ENCODE measurements at regions of chr1 and their contacts with region 1.

Region 1: GRCh38 chr1:225474986-225475820 is 47.4 kb upstream of the LBR start:
- DNase-seq: peak in 1 of 2 donors; percentile 69
- ATAC-seq: peak; percentile 84 to 90 (median 90)
- H3K4me3 ChIP-seq: peak overlapping the region in 4 of 10 donors; percentile 19 to 35 (median 26)
- H3K27ac ChIP-seq: no peak overlapping the region
- H3K4me1 ChIP-seq: peaks cover 0 to 9% (median 6%) of the 10 kb centered on the region in 9 donors
- H3K27me3 ChIP-seq: no peaks in the 10 kb centered on the region
- CTCF ChIP-seq: peak; percentile 100

Region 2: DNA sequence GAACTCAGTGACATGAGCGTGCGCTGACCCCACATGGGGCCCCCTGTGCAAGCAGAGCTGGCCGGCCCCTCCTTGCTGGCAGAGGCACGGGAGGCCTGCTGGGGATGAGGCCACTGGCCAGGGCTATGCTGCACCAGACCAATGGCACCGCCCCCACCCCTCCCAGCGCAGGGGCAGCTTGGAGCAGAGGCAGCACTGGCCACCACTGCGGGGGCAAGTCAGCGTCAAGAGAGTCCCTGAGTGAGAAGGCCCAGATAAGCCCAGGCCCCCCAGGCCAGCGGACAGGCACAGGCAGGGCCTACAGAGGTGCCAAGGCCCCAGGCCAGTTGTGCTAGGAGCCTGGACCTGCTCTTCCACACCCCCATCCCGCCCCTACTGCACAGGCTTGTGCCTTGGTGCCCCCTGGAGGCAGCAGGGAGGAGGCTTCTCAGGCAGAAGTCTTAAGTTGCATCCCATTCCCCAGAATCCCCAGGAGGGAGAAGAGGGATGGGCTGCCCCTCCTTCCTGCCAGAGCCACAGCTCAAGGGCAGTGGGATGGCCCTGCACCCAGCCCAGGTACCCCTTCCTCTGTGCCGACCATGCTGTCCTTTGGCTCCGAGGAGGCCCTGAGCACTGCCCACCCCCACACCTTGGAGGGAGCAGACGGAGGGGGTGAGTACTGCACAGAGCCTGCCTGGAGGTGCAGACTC is 370.5 kb after region 1 on chr1:
- intact Hi-C with region 1: loop called (anchors 1 to 10 kb)
- DNase-seq: peak; percentile 78 to 81
- ATAC-seq: peak; percentile 77 to 88 (median 81)
- H3K4me3 ChIP-seq: no peak overlapping the region
- H3K27ac ChIP-seq: peak overlapping the region in 6 of 10 donors; percentile 12 to 38 (median 24)
- H3K4me1 ChIP-seq: peaks cover 0 to 40% (median 17%) of the 10 kb centered on the region in 9 donors
- H3K27me3 ChIP-seq: no peaks in the 10 kb centered on the region
- CTCF ChIP-seq: peak; percentile 57 to 81 (median 75)

Region 3: DNA sequence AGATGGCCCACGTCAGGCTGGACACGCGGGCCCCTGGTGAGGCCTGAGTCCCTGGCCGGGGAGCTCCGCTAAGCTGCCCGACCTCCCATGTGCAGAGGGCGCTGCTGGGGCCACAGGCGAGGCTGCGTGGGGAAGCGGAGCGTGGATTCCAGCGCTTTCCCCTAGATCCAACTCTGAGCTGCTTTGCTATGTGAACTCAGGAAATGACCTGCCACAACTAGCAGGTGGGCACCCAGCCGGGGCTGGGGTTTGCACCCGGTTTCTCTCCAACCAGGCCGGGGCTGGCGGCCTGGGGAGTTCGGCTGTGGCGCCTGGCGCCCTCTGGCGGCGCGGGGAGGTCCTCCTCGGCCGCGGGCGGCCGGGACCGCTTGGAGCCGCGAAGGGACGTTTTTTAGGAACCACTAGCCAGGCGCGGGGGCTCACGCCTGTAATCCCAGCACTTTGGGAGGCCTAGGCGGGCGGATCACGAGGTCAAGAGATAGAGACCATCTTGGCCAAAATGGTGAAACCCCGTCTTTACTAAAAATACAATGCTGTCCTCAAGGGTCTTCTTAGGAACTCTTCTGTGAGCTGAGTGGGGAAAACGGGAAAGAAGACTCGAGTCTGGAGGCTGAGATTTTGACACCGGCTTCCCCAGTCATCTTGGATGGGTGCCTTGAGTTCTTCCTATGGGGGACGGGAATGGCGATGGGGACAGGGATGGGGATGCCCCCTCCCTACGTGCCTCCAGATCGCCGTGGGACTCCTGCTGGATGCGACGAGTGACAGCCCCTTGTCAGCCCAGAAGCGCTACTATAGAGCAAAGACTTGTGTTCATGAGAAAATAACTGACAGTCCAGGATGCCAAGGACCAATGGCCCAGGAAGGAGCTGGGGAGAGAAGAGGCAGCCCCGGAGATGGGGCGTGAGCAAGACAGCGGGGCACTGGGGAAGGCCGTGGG is 436.3 kb after region 1 on chr1:
- intact Hi-C with region 1: loop called (anchors 1 to 5 kb)
- DNase-seq: peak; percentile 50 to 81
- ATAC-seq: peak; percentile 80 to 95 (median 90)
- H3K4me3 ChIP-seq: peak overlapping the region in 5 of 10 donors; percentile 19 to 35 (median 26)
- H3K27ac ChIP-seq: no peak overlapping the region
- H3K4me1 ChIP-seq: peaks cover 0 to 13% (median 4%) of the 10 kb centered on the region in 9 donors
- H3K27me3 ChIP-seq: no peaks in the 10 kb centered on the region
- CTCF ChIP-seq: peak; percentile 88 to 98 (median 96)

Measured in heart right ventricle (tissue), 16 donors.